ENCODE measurements at regions of chr15 and their contacts with region 1.

Region 1: GRCh38 chr15:31365655-31366127 is 39.1 kb downstream of the KLF13 start:
- DNase-seq: peak; percentile 92
- ATAC-seq: peak; percentile 68
- H3K4me3 Mint-ChIP-seq: peak overlapping the region; percentile 61
- H3K27ac Mint-ChIP-seq: peak overlapping the region; percentile 96
- H3K4me1 Mint-ChIP-seq: peaks cover 99% of the 10 kb centered on the region
- H3K27me3 Mint-ChIP-seq: no peaks in the 10 kb centered on the region

Region 2: GRCh38 chr15:31344823-31345605 is 20.7 kb before region 1 on chr15:
- CTCF ChIA-PET with region 1: interaction called, 20 read pairs
- POLR2A ChIA-PET with region 1: interaction called, 15 read pairs
- intact Hi-C with region 1: loop called (anchors 1 to 2 kb)
- DNase-seq: peak; percentile 65
- ATAC-seq: peak; percentile 12
- H3K4me3 Mint-ChIP-seq: peak overlapping the region; percentile 87
- H3K27ac Mint-ChIP-seq: peak overlapping the region; percentile 97
- H3K4me1 Mint-ChIP-seq: peaks cover 97% of the 10 kb centered on the region
- H3K27me3 Mint-ChIP-seq: no peaks in the 10 kb centered on the region

Region 3: GRCh38 chr15:31350771-31351170 is 14.9 kb before region 1 on chr15:
- CTCF ChIA-PET with region 1: interaction called, 28 read pairs
- POLR2A ChIA-PET with region 1: interaction called, 15 read pairs
- intact Hi-C with region 1: loop called (anchors 1 to 2 kb)
- DNase-seq: no peak
- ATAC-seq: no peak
- H3K4me3 Mint-ChIP-seq: peak overlapping the region; percentile 62
- H3K27ac Mint-ChIP-seq: peak overlapping the region; percentile 98
- H3K4me1 Mint-ChIP-seq: peaks cover 99% of the 10 kb centered on the region
- H3K27me3 Mint-ChIP-seq: no peaks in the 10 kb centered on the region

Region 4: DNA sequence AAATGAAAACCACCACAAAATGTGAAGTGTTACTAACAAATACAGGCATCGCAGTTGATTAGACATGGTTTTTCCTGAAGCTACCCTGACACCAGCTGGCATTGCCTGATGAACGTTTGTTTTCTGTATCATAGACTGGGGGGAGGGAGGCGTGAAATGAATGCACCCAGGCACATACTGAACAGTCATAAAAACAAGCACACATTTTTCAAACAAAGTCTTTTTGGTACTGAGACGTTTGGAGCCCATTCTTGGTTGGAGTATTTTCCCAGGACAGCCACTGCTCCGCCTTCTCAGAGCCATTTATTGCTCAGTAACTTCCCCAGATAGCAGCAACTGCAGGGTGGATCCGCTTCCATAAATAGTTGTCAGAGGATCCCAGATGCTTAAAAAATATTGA is 13.4 kb after region 1 on chr15:
- CTCF ChIA-PET with region 1: interaction called, 5 read pairs
- POLR2A ChIA-PET with region 1: interaction called, 3 read pairs
- intact Hi-C with region 1: loop called in 1 of 2 experiments (anchors 1 kb)
- DNase-seq: peak; percentile 58
- ATAC-seq: peak; percentile 74
- H3K4me3 Mint-ChIP-seq: no peak overlapping the region
- H3K27ac Mint-ChIP-seq: peak overlapping the region; percentile 80
- H3K4me1 Mint-ChIP-seq: peaks cover 49% of the 10 kb centered on the region
- H3K27me3 Mint-ChIP-seq: no peaks in the 10 kb centered on the region

Region 5: GRCh38 chr15:31391687-31392671 is 26.3 kb after region 1 on chr15:
- CTCF ChIA-PET with region 1: interaction called, 7 read pairs
- POLR2A ChIA-PET with region 1: interaction called, 4 read pairs
- intact Hi-C with region 1: loop called (anchors 1 to 2 kb)
- DNase-seq: peak; percentile 90
- ATAC-seq: peak; percentile 92
- H3K4me3 Mint-ChIP-seq: peak overlapping the region; percentile 80
- H3K27ac Mint-ChIP-seq: peak overlapping the region; percentile 71
- H3K4me1 Mint-ChIP-seq: peaks cover 40% of the 10 kb centered on the region
- H3K27me3 Mint-ChIP-seq: no peaks in the 10 kb centered on the region

Region 6: DNA sequence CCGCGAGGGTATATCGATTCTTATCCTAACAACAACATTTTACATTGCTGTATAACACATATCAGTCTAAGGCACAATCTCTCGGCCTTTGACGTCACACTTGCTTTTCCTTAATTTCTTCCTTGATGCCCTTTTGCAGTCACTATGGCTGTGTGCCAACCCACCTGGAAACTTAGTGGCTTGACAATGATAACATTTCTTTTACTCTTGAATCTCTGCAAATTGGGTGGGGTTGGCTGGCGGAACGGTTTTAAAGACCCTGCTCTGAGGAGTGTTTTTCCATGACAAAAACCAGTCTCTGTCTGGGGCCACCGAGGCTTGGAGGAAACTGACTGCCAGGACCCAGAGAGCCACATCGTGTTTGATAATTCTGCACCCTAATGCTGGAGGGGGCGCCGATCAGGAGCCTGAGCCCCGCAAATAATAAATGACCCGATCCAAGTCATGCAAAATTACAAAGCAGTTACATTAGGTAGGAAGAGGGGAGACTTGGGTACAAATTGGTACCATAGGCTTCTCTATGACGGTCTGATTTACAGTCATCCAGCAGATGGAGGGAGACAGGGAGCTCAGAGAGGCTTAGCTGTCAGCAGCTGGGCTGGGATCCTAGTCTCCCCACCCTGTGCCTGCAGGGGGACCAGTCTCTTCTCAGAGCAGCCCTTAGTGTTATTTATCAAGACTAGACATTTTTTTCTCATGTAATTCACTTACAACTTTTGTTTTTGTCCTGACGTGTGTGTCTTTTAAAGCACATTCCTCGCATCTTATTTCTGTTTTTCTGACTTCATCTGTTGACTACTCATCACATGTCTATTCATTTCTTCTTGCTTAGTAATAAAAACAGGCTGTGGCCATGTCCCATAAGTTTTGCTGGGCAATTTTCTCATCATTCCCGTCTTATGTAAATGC is 76.8 kb after region 1 on chr15:
- CTCF ChIA-PET with region 1: interaction called, 21 read pairs
- POLR2A ChIA-PET with region 1: interaction called, 3 read pairs
- intact Hi-C with region 1: no loop called
- DNase-seq: peak; percentile 38
- ATAC-seq: no peak
- H3K4me3 Mint-ChIP-seq: peak overlapping the region; percentile 8
- H3K27ac Mint-ChIP-seq: peak overlapping the region; percentile 4
- H3K4me1 Mint-ChIP-seq: peaks cover 58% of the 10 kb centered on the region
- H3K27me3 Mint-ChIP-seq: peaks cover 2% of the 10 kb centered on the region